PC-9 (cell line): ENCODE measurements at regions of chr6 and their contacts with region 1.

Region 1: DNA sequence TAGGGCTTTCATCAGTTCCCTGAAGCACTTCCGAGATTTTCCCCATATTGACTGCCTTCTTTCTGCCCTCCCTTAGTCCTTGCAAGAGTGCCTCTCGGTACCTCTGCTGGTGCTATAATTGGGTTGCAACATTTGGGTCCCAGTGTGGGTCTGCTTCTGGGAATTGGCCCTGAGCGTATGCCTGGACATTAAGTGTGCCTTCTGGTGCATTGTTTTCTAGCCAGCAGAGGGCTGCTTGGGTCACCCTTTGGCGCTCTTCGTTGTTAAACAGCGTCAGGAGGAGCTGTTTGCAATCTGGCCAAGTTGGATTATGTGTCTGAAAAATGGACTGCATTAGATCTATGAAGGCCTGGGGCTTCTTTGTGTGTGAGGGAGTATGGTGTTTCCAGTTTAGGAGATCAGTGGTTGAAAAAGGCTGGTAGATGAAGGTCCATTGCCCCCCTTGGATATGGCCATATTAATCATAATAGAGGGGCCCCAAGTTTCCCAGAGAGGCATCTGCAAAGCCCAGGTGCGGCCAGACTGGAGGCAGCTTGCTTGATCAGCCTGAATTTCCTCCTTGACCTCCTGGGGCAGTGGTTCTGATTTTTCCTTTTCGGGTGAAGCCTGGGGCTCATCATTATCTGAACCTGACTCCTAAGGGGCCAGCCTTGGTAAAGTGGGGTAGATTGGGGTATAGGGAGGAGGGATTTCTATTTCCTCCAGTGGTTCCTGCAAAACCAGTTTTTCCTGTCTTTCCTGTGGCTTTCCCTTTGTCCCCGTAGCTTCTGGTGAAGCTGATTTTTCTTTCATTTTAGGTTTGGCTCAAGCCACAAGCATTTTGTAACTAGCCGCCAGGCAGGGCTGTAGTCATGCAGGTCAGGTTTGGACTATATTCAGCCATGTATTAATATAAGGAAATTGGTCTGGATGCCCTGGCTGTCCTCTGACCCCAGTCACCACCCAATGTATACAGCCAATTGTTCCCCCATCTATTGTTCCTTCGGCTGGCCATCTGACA is 85.4 kb upstream of the GPR6 start:
- DNase-seq: peak; percentile 79 to 98
- H3K4me3 ChIP-seq: peak overlapping the region; percentile 27; the same call in 1 of the 2 replicates
- H3K27ac ChIP-seq: peak overlapping the region; percentile 73
- H3K4me1 ChIP-seq: peaks cover 53% of the 10 kb centered on the region
- H3K27me3 ChIP-seq: no peaks in the 10 kb centered on the region
- CTCF ChIP-seq: peak; percentile 59

Region 2: DNA sequence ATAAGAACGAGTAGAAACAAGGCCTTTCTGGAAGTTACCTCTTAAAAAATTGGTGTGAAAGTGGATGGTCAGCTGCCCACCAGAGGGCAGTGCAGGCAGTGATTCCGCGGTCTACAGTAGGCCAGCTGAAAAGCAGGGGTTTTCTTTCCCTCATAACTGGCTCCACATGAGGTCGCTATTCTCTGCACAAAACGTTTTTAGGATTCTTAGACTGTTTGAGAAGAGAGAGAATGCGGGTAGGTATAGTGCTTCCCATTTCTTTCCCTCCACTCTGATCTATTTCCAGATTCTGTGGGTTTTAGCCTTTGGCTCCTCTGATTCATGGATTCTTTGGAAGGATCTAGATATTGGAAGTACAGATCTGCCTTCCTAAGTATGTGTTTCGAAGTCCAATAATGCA is 187.5 kb before region 1 on chr6:
- CTCF ChIA-PET with region 1: no interaction called
- POLR2A ChIA-PET with region 1: no interaction called
- intact Hi-C with region 1: loop called (anchors 1 kb)
- DNase-seq: peak; percentile 76 to 77
- H3K4me3 ChIP-seq: no peak overlapping the region
- H3K27ac ChIP-seq: no peak overlapping the region
- H3K4me1 ChIP-seq: peaks cover 6% of the 10 kb centered on the region; the same call in 1 of the 2 replicates
- H3K27me3 ChIP-seq: no peaks in the 10 kb centered on the region
- CTCF ChIP-seq: peak; percentile 98

Region 3: GRCh38 chr6:109793793-109794192 is 98.9 kb before region 1 on chr6:
- CTCF ChIA-PET with region 1: no interaction called
- POLR2A ChIA-PET with region 1: no interaction called
- intact Hi-C with region 1: loop called (anchors 1 kb)
- DNase-seq: peak; percentile 31 to 90
- H3K4me3 ChIP-seq: no peak overlapping the region
- H3K27ac ChIP-seq: peak overlapping the region; percentile 84
- H3K4me1 ChIP-seq: peaks cover 50% of the 10 kb centered on the region
- H3K27me3 ChIP-seq: no peaks in the 10 kb centered on the region
- CTCF ChIP-seq: no peak

Region 4: DNA sequence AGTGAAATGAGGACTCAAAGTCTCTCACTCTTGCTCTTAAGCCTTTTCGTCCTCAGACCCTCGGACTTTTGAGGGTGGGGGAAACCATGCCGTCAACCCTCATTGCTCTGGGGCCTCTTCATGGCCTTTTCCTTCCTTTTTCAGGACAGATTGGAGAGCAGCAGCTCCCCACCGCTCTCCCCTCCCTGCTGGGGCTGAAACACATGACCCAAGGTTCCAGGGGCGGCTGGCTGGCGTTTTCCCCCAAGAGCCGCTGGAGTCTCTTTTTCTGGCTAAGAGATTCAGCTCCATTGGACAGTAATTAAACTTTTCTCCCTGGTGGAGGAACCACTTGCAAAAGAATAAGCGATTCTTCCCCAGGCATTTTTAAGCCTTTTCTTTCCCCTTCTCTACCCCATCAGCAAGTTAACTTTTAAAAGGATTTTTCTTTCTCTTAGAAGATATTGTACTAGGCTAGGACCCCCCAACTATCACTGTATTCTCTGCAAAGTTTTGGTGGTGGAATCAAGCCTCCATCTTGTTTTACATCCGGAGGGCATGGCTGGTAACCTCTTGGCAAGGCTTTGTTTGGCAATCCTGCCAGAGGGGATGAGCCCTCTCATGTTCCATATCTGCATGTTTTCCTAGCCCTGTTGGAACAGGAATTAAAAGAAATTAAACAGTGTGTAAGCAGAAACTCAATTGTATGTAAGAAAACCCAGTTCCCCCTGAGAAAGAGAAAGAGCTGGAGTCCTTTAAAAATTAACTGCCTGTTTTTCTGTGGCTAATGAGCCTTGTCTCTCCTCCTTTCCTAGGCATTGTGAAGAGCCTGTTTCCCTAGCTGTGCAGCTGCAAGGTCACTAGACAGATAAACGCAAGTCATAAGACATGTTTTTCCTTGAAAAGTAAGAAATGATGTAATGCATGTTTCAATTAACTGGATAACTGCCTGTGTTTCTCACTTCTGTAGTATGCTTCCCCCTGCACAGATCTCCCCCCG is 15.4 kb before region 1 on chr6:
- CTCF ChIA-PET with region 1: interaction called, 5 read pairs
- POLR2A ChIA-PET with region 1: no interaction called
- intact Hi-C with region 1: loop called (anchors 2 kb)
- DNase-seq: no peak
- H3K4me3 ChIP-seq: no peak overlapping the region
- H3K27ac ChIP-seq: no peak overlapping the region
- H3K4me1 ChIP-seq: peaks cover 28% of the 10 kb centered on the region
- H3K27me3 ChIP-seq: no peaks in the 10 kb centered on the region
- CTCF ChIP-seq: no peak

Region 5: DNA sequence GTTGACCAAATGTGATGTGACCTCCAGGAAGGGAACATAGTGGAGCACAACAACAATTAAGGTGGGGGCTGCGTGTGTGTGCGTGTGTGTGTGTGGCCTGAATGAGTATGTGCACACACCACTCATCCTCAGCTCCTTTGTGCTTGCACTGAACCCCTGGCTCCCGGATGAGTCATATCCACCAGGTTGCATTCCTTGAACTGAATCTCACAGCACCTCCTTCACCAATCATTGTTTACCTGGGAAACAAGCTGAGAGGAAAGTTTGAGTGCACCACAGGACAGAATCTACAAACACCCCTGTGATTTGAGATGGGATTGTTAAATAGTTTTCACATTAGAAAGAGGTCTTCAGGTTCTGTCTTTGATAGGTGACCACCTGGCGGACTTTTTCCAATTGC is 51.7 kb after region 1 on chr6:
- CTCF ChIA-PET with region 1: no interaction called
- POLR2A ChIA-PET with region 1: no interaction called
- intact Hi-C with region 1: loop called (anchors 1 kb)
- DNase-seq: peak; percentile 65 to 92
- H3K4me3 ChIP-seq: peak overlapping the region; percentile 20; the same call in 1 of the 2 replicates
- H3K27ac ChIP-seq: peak overlapping the region; percentile 56
- H3K4me1 ChIP-seq: peaks cover 37% of the 10 kb centered on the region
- H3K27me3 ChIP-seq: no peaks in the 10 kb centered on the region
- CTCF ChIP-seq: no peak

Region 6: GRCh38 chr6:109961666-109962065 is 68.9 kb after region 1 on chr6:
- CTCF ChIA-PET with region 1: no interaction called
- POLR2A ChIA-PET with region 1: no interaction called
- intact Hi-C with region 1: loop called (anchors 5 kb)
- DNase-seq: peak in 1 of 2 experiments; percentile 90
- H3K4me3 ChIP-seq: no peak overlapping the region
- H3K27ac ChIP-seq: peak overlapping the region; percentile 69
- H3K4me1 ChIP-seq: peaks cover 47% of the 10 kb centered on the region
- H3K27me3 ChIP-seq: no peaks in the 10 kb centered on the region
- CTCF ChIP-seq: no peak

Region 7: DNA sequence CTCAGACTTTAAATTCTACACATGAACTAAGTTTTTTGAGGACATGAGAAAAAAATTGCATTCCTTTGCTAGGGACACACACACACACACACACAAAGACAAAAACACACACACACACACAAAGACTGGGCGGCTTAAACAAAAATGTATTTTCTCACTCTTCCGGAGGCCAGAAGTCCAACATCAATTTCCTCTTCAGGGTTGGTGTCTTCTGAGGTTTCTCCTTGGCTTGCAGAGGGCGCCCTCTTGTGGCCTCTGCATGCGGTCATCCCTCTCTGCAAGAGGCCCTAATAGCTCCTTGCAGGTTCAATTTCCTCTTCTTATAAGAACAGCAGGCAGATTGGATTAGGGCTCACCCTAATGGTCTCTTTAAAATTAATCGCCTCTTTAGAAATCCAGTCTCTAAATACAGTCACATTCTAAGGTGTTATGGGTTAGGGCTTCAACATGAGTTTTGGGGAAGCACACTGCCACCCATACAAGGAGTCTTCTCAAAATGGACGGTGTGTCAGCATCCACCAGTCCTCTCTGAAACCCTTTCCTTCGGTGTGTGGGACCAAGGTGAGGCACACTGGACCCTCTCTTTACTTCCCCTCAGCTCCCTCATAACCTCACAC is 146.7 kb after region 1 on chr6:
- CTCF ChIA-PET with region 1: interaction called, 25 read pairs
- POLR2A ChIA-PET with region 1: no interaction called
- intact Hi-C with region 1: loop called (anchors 1 kb)
- DNase-seq: peak; percentile 74 to 83
- H3K4me3 ChIP-seq: peak overlapping the region; percentile 9; the same call in 1 of the 2 replicates
- H3K27ac ChIP-seq: no peak overlapping the region
- H3K4me1 ChIP-seq: peaks cover 12% of the 10 kb centered on the region
- H3K27me3 ChIP-seq: no peaks in the 10 kb centered on the region
- CTCF ChIP-seq: peak; percentile 96